Motor neuron (in vitro differentiated cells): ENCODE measurements at regions of chr7 and their contacts with region 1.

Region 1: DNA sequence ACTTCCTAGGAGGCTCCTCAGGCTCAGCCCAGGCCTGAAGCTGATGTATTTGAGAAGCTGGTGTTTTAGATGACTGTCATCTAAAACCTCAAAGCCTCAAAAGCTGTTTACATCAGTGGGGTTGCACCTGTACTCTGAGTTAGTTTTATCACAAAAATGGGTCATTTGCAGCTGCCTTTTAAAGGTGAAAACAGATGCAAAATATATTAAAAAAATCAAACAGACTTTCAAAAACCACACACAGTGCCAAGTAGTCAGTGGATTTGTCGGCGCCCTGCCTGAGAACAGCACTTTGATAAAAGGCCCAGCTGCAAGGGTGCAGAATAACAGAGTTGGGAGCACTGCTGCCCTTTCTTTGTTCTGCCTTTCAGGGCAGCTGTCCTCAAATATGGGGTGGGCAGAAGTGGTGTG is 103.0 kb downstream of the VOPP1 start:
- ATAC-seq: peak in 1 of 8 experiments; percentile 34
- H3K4me3 ChIP-seq: no peak overlapping the region
- H3K27ac ChIP-seq: no peak overlapping the region
- H3K4me1 ChIP-seq: no peaks in the 10 kb centered on the region

Region 2: DNA sequence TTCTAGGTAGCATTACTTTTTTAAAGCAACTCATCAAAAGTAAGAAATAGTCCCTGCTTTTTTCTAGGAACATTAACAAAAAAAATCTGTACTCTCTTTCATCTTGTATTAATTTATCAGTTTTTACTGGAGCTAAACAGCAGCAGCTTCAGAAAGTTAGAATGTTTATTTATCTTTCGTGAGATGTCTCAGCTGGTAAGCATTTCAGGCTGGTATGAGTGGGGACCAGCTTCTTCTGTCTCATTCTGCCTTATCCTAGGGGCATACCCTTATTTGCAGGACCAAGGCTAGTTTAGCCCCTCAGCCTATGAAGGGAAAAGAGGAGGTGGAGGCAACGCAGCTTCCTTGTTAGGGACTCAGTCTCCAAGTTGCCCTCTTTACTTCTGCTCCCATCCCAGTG is 69.1 kb before region 1 on chr7:
- in situ Hi-C with region 1: no loop called
- ATAC-seq: no peak
- H3K4me3 ChIP-seq: no peak overlapping the region
- H3K27ac ChIP-seq: no peak overlapping the region
- H3K4me1 ChIP-seq: no peaks in the 10 kb centered on the region

Region 3: GRCh38 chr7:55572378-55573233 is 103.3 kb after region 1 on chr7 and contains the start of gene VOPP1:
- in situ Hi-C with region 1: loop called in 1 of 9 experiments (anchors 25 kb)
- ATAC-seq: peak; percentile 32 to 85 (median 76)
- H3K4me3 ChIP-seq: peak within 1 kb of the TSS; percentile 78 to 99 (median 95)
- H3K27ac ChIP-seq: peak within 1 kb of the TSS; percentile 71
- H3K4me1 ChIP-seq: peaks cover 33 to 35% of the 10 kb centered on the region in 2 donors
- total RNA-seq, gene VOPP1: 43.9 to 131 (median 56.3) TPM